Naive thymus-derived CD4-positive, alpha-beta T cell (primary cell): ENCODE measurements at regions of chr11 and their contacts with region 1.

Region 1: DNA sequence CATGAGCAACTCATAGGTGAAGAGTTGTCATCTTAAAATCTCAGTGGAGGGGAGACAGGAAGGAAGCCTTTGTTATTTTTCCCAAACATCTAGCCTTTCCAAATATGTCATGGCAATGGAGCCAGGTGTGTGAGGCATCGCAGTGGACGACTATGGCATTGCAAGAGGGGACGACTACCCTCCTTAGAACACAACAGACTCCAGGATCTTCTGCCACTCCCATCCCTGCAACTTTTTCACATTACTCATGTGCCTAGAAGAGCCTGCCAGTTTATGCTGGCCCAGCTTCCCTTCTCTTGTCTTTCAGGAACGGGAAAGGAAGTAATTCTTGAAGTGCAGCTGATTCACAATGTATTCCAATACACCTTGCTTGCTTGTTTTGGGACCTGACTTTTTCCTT is 1008.4 kb downstream of the OPCML start:
- DNase-seq: no peak
- ATAC-seq: no peak
- H3K4me3 ChIP-seq: no peak overlapping the region
- H3K4me3 Mint-ChIP-seq: no peak overlapping the region
- H3K27ac ChIP-seq: no peak overlapping the region
- H3K27ac Mint-ChIP-seq: no peak overlapping the region
- H3K4me1 ChIP-seq: no peaks in the 10 kb centered on the region
- H3K4me1 Mint-ChIP-seq: no peaks in the 10 kb centered on the region
- H3K27me3 ChIP-seq: no peaks in the 10 kb centered on the region
- H3K27me3 Mint-ChIP-seq: no peaks in the 10 kb centered on the region

Region 2: GRCh38 chr11:131977231-131977630 is 546.7 kb before region 1 on chr11:
- CTCF ChIA-PET with region 1: no interaction called
- POLR2A ChIA-PET with region 1: no interaction called
- intact Hi-C with region 1: no loop called
- DNase-seq: no peak
- ATAC-seq: no peak
- H3K4me3 ChIP-seq: no peak overlapping the region
- H3K4me3 Mint-ChIP-seq: no peak overlapping the region
- H3K27ac ChIP-seq: no peak overlapping the region
- H3K27ac Mint-ChIP-seq: no peak overlapping the region
- H3K4me1 ChIP-seq: no peaks in the 10 kb centered on the region
- H3K4me1 Mint-ChIP-seq: no peaks in the 10 kb centered on the region
- H3K27me3 ChIP-seq: no peaks in the 10 kb centered on the region
- H3K27me3 Mint-ChIP-seq: peaks cover 0 to 11% (median 0%) of the 10 kb centered on the region in 5 donors

Region 3: DNA sequence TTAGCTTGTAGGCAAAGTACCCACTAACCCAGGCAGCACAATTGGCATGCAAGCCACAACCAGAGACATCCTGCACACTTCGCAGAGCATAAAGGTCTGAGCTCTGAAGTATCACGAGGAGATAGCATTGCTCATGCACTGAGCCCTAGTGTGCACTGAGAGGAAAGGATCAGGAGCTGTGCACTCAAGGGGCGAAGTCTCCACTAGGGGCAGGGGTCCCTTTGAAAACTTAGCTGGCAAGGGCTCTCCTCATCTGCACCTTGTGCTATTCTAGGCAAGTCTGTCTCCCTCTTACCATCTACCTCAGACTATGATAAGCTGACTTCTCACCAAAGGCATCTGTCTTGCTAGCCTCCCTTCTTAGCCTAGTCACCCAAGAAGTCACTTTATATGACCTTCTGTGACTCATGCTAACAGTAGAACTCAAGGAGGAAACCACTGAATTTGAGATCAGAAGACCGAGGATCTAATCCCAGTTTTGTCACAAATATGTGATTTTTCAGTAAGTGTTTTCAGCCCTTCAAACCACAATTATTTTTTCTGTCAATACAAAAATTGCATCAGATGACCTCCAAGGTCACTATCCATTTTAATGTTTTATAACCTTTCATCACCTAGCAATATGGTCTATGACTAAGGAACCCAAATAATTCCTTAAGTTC is 75.5 kb before region 1 on chr11:
- CTCF ChIA-PET with region 1: no interaction called
- POLR2A ChIA-PET with region 1: no interaction called
- intact Hi-C with region 1: loop called in 1 of 2 experiments (anchors 10 kb)
- DNase-seq: no peak
- ATAC-seq: no peak
- H3K4me3 ChIP-seq: no peak overlapping the region
- H3K4me3 Mint-ChIP-seq: no peak overlapping the region
- H3K27ac ChIP-seq: no peak overlapping the region
- H3K27ac Mint-ChIP-seq: no peak overlapping the region
- H3K4me1 ChIP-seq: no peaks in the 10 kb centered on the region
- H3K4me1 Mint-ChIP-seq: no peaks in the 10 kb centered on the region
- H3K27me3 ChIP-seq: no peaks in the 10 kb centered on the region
- H3K27me3 Mint-ChIP-seq: no peaks in the 10 kb centered on the region